ENCODE measurements at regions of chr6 and their contacts with region 1.

Region 1: DNA sequence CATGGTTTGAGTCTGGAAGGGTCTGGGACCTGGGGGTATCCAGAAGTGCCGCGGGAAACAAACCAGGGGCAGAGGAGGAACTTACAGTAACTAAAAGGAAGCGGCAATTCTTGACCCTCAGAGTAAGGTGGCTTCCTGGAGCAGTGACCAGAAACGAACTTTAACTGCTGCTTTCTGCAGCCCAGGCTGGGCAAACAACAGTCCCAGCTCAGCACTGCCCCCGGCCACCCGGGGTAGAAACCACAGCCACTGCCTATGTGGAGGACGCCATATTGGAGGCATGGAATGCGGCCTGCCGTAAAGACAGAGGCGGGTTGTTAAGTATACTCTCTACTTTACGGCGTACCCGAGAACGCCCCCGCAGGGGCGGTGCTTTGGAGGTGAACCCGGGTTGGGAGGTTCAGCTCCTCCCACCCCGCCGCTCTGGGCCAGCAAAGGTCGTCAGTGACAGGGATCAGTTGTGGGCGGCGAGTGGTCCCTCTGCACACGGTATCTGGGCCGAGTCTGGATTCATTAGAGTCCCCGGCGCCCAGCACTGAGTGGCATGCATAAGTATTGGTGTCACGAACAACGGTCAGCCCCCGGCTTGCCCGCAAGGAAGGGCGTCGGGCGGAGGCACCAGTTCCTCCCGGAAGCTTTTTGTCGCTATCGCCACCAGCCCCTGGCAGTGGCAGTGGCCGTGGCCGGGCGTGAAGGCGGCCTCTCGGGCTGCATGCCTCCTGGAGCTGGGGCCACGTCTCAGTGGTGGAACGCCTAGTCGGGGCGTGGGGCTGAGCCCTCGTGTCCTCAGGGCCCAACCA is at the start of gene PDSS2:
- DNase-seq: peak; percentile 83 to 98 (median 95)
- ATAC-seq: peak; percentile 100
- H3K4me3 ChIP-seq: peak within 1 kb of the TSS; percentile 95
- H3K4me3 Mint-ChIP-seq: peak within 1 kb of the TSS; percentile 87 to 99 (median 96)
- H3K27ac ChIP-seq: peak within 1 kb of the TSS; percentile 75
- H3K27ac Mint-ChIP-seq: peak within 1 kb of the TSS; percentile 92 to 99 (median 96)
- H3K4me1 ChIP-seq: peaks cover 5% of the 10 kb centered on the region in 2 donors
- H3K4me1 Mint-ChIP-seq: peaks cover 10 to 41% (median 36%) of the 10 kb centered on the region in 7 donors
- H3K27me3 ChIP-seq: no peaks in the 10 kb centered on the region
- H3K27me3 Mint-ChIP-seq: peaks cover 0 to 7% (median 0%) of the 10 kb centered on the region in 5 donors
- total RNA-seq, gene PDSS2: 12.0 to 15.3 (median 12.1) TPM

Region 2: DNA sequence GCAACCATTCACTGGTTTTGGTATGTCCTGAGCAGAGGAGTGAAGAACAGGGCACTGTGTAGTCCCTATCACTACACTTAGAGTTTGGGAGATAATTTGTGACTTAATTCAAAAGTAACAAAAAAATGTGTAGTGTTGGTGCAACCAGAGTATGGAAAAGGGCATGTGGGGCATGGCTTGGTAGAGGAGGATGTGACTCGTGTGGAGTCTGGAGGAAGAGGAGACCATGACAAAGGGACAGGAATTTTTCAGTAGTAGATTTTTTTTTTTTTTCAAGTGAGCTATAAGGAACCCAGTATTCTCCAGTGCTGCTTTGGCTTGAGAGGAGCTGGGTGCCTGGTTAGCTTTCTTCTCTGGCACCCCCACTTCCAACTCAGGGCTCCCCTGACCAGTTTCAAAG is 426.4 kb before region 1 on chr6:
- CTCF ChIA-PET with region 1: no interaction called
- POLR2A ChIA-PET with region 1: interaction called, 4 read pairs
- intact Hi-C with region 1: loop called (anchors 1 kb)
- DNase-seq: no peak
- ATAC-seq: no peak
- H3K4me3 ChIP-seq: no peak overlapping the region
- H3K4me3 Mint-ChIP-seq: no peak overlapping the region
- H3K27ac ChIP-seq: no peak overlapping the region
- H3K27ac Mint-ChIP-seq: peak overlapping the region in 1 of 9 donors; percentile 24
- H3K4me1 ChIP-seq: peaks cover 3 to 17% of the 10 kb centered on the region in 2 donors
- H3K4me1 Mint-ChIP-seq: peaks cover 22 to 56% (median 46%) of the 10 kb centered on the region in 7 donors
- H3K27me3 ChIP-seq: no peaks in the 10 kb centered on the region
- H3K27me3 Mint-ChIP-seq: no peaks in the 10 kb centered on the region

Region 3: DNA sequence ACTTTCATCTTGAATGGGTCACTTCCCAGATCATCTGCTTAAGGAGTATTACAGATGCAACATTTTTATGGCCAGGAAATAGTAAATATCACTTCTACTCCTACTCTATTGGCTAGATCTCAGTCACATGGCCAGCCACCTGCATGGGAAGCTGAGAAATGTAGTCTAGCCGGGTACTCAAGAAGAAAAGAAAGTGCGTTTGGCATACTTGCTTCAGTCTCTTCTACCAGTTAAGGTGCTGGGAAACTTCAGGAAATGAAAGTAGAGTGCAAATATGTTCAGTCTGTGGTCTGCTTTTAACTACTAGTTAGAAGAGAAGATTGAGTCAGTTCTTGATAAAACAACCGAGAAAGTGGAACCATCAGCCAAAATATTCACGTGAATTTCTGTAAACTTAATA is 129.3 kb before region 1 on chr6:
- CTCF ChIA-PET with region 1: no interaction called
- POLR2A ChIA-PET with region 1: no interaction called
- intact Hi-C with region 1: loop called in 1 of 2 experiments (anchors 2 kb)
- DNase-seq: peak in 4 of 9 donors; percentile 5 to 25 (median 16)
- ATAC-seq: peak; percentile 50
- H3K4me3 ChIP-seq: no peak overlapping the region
- H3K4me3 Mint-ChIP-seq: peak overlapping the region in 7 of 10 donors; percentile 6 to 63 (median 32)
- H3K27ac ChIP-seq: no peak overlapping the region
- H3K27ac Mint-ChIP-seq: peak overlapping the region in 7 of 9 donors; percentile 1 to 71 (median 30)
- H3K4me1 ChIP-seq: peaks cover 4 to 6% of the 10 kb centered on the region in 2 donors
- H3K4me1 Mint-ChIP-seq: peaks cover 9 to 25% (median 17%) of the 10 kb centered on the region in 7 donors
- H3K27me3 ChIP-seq: no peaks in the 10 kb centered on the region
- H3K27me3 Mint-ChIP-seq: no peaks in the 10 kb centered on the region

Region 4: GRCh38 chr6:107489636-107490565 is 30.4 kb after region 1 on chr6 and contains the start of gene SOBP:
- CTCF ChIA-PET with region 1: no interaction called
- POLR2A ChIA-PET with region 1: interaction called, 10 read pairs
- intact Hi-C with region 1: loop called (anchors 1 kb)
- DNase-seq: peak in 8 of 9 donors; percentile 28 to 52 (median 35)
- ATAC-seq: peak; percentile 58
- H3K4me3 ChIP-seq: peak within 1 kb of the TSS; percentile 59
- H3K4me3 Mint-ChIP-seq: peak within 1 kb of the TSS; percentile 85 to 95 (median 90)
- H3K27ac ChIP-seq: no peak within 1 kb of the TSS
- H3K27ac Mint-ChIP-seq: peak within 1 kb of the TSS in 4 of 9 donors; percentile 7 to 39 (median 34)
- H3K4me1 ChIP-seq: peaks cover 9 to 15% of the 10 kb centered on the region in 2 donors
- H3K4me1 Mint-ChIP-seq: peaks cover 11 to 22% (median 20%) of the 10 kb centered on the region in 7 donors
- H3K27me3 ChIP-seq: peaks cover 18 to 23% of the 10 kb centered on the region in 2 donors
- H3K27me3 Mint-ChIP-seq: peaks cover 32 to 52% (median 43%) of the 10 kb centered on the region in 5 donors
- total RNA-seq, gene SOBP: 0.08 to 0.15 TPM in 2 of 5 experiments, not detected in the others

Region 5: DNA sequence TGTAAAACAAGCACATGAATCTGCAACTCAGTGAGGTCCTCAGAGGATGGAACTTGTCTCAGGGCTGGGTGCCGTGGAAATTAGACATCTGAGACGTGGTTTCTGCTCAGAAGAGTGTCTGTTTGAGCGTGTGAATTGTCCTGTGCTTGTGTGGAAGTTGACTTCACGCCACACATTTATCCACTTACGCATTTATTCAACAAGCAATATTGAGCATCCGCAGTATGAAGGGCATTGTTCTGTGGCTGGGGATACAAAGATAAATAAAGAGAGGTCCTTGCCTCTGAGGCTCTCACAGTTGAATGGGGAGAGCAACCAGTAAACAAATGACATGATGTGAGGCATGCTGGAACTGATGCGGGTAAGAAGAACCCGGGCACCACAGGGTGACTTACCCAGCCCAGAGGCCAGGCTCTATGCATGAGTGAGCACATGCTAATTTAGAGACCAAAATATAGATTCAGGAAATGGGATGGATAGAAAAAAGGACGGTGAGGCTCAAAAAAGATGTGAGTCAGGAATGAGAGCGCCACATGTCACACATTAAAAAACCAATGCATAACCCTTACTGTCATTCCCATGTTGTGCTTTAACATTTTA is 90.9 kb after region 1 on chr6:
- CTCF ChIA-PET with region 1: no interaction called
- POLR2A ChIA-PET with region 1: no interaction called
- intact Hi-C with region 1: no loop called
- DNase-seq: no peak
- ATAC-seq: no peak
- H3K4me3 ChIP-seq: no peak overlapping the region
- H3K4me3 Mint-ChIP-seq: no peak overlapping the region
- H3K27ac ChIP-seq: no peak overlapping the region
- H3K27ac Mint-ChIP-seq: no peak overlapping the region
- H3K4me1 ChIP-seq: no peaks in the 10 kb centered on the region
- H3K4me1 Mint-ChIP-seq: no peaks in the 10 kb centered on the region
- H3K27me3 ChIP-seq: no peaks in the 10 kb centered on the region
- H3K27me3 Mint-ChIP-seq: peaks cover 0 to 13% (median under 1%) of the 10 kb centered on the region in 5 donors

Region 6: GRCh38 chr6:108074359-108075144 is 615.1 kb after region 1 on chr6 and contains the start of gene OSTM1:
- CTCF ChIA-PET with region 1: no interaction called
- POLR2A ChIA-PET with region 1: no interaction called
- intact Hi-C with region 1: loop called in 1 of 2 experiments (anchors 1 kb)
- DNase-seq: peak; percentile 88 to 98 (median 94)
- ATAC-seq: peak; percentile 99
- H3K4me3 ChIP-seq: peak within 1 kb of the TSS; percentile 99
- H3K4me3 Mint-ChIP-seq: peak within 1 kb of the TSS; percentile 84 to 94 (median 90)
- H3K27ac ChIP-seq: peak within 1 kb of the TSS; percentile 89
- H3K27ac Mint-ChIP-seq: peak within 1 kb of the TSS; percentile 81 to 98 (median 91)
- H3K4me1 ChIP-seq: peaks cover 18% of the 10 kb centered on the region in 2 donors
- H3K4me1 Mint-ChIP-seq: peaks cover 11 to 35% (median 23%) of the 10 kb centered on the region in 7 donors
- H3K27me3 ChIP-seq: no peaks in the 10 kb centered on the region
- H3K27me3 Mint-ChIP-seq: peaks cover 0 to 25% (median 4%) of the 10 kb centered on the region in 5 donors
- total RNA-seq, gene OSTM1: 25.0 to 48.9 (median 36.7) TPM

Measured in naive thymus-derived CD4-positive, alpha-beta T cell (primary cell).